ENCODE measurements at regions of chr12 and their contacts with region 1.

Region 1: DNA sequence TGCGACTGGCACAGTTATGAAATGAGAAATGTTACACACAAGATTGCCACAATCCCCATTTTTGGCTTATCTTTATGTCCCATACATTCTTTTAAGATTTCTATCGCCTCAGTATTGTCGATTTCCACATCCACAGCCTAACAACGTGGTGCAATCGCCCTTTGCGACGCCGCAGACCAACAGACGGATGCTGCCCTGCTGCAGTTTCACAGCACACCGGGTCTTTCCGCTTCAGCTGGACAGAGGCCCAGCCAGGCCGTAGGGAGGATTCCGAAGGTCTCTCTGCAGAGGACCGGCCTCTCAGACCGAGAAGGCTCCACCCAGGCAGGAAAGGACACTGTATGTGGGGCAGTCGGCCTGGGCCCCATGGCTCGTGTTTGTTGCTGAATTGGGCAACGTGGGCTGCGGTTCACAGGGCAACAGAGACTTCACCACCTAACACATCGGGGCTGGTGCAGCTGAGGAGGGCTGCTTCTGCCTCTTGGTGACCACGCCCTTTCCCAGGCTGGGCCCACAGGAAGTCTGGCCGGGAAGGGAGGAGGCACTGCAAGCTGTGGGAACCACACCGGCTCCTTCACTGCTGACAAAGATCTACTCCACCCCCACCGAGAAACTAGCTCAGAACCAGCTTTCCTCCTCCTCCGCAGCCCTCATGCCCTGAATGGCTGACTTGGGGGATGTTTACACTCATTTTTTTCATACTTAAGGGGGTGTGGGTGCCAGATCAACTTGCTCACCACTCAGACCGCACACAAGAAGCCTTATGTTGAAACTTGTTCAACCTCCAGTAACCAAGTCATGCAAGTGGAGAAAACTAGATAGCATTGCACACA is 32.9 kb upstream of the MDM1 start:
- DNase-seq: peak; percentile 91
- H3K4me3 ChIP-seq: peak overlapping the region; percentile 59
- H3K27ac ChIP-seq: peak overlapping the region; percentile 94
- H3K4me1 ChIP-seq: peaks cover 48% of the 10 kb centered on the region
- H3K27me3 ChIP-seq: no peaks in the 10 kb centered on the region
- CTCF ChIP-seq: no peak

Region 2: GRCh38 chr12:67977668-67978067 is 387.4 kb before region 1 on chr12:
- intact Hi-C with region 1: no loop called
- DNase-seq: no peak
- H3K4me3 ChIP-seq: no peak overlapping the region
- H3K27ac ChIP-seq: no peak overlapping the region
- H3K4me1 ChIP-seq: no peaks in the 10 kb centered on the region
- H3K27me3 ChIP-seq: no peaks in the 10 kb centered on the region
- CTCF ChIP-seq: no peak

Region 3: GRCh38 chr12:68148258-68148951 is 216.7 kb before region 1 on chr12:
- intact Hi-C with region 1: no loop called
- DNase-seq: no peak
- H3K4me3 ChIP-seq: no peak overlapping the region
- H3K27ac ChIP-seq: no peak overlapping the region
- H3K4me1 ChIP-seq: peaks cover 7% of the 10 kb centered on the region
- H3K27me3 ChIP-seq: no peaks in the 10 kb centered on the region
- CTCF ChIP-seq: no peak

Region 4: DNA sequence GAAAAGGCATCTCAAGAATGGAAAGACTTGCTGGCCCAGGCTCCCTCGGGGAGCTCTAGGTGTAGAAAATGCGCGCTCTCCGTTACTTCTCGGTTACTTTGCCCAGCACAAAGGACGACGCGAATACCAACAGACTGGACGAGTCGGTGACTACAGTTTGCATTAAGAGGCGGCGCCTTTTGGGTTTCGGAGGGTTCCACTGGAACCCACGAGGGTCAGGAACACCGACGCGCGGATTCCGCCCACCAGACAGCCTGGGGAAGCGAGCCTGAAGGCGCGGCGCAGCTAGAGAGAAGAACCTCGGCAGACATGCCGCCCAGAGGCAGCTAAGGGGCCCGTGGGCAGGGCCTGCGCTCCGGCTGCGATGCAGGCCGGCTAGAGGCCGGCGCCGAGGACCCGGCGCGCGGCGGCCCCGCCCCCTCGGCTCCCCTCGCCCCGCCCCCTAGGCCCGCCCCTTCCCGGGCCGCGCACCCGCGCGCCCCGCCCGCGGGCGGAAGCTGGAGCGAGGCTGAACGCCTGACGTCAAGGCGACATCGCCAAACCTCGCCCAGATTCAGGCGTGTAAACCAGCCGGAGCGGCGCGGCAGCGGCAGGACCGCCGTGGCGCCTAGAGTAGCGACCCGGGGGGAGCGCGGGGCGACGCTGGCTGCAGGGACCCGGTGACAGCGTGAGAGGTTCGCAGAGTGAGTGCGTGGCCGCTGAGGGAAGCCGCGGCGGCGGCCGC is 245.4 kb after region 1 on chr12 and contains the start of gene RAP1B:
- intact Hi-C with region 1: loop called (anchors 10 kb)
- DNase-seq: peak; percentile 88
- H3K4me3 ChIP-seq: peak within 1 kb of the TSS; percentile 82
- H3K27ac ChIP-seq: peak within 1 kb of the TSS; percentile 95
- H3K4me1 ChIP-seq: peaks cover 48% of the 10 kb centered on the region
- H3K27me3 ChIP-seq: no peaks in the 10 kb centered on the region
- CTCF ChIP-seq: no peak
- total RNA-seq, gene RAP1B: 41.5 TPM

Region 5: GRCh38 chr12:68665016-68665569 is 300.0 kb after region 1 on chr12:
- intact Hi-C with region 1: loop called (anchors 10 kb)
- DNase-seq: no peak
- H3K4me3 ChIP-seq: no peak overlapping the region
- H3K27ac ChIP-seq: peak overlapping the region; percentile 24
- H3K4me1 ChIP-seq: peaks cover 17% of the 10 kb centered on the region
- H3K27me3 ChIP-seq: no peaks in the 10 kb centered on the region
- CTCF ChIP-seq: peak; percentile 38